ENCODE measurements at regions of chr9 and their contacts with region 1.

Region 1: GRCh38 chr9:115591584-115591984 is 473.6 kb upstream of the TNC start:
- DNase-seq: no peak
- H3K4me3 ChIP-seq: no peak overlapping the region
- H3K27ac ChIP-seq: no peak overlapping the region
- H3K4me1 ChIP-seq: no peaks in the 10 kb centered on the region
- H3K27me3 ChIP-seq: peaks cover 0 to 29% (median 3%) of the 10 kb centered on the region in 7 donors
- CTCF ChIP-seq: peak in 8 of 11 experiments; percentile 19 to 57 (median 40)
- POLR2A ChIP-seq: no peak

Region 2: GRCh38 chr9:116572095-116572748 is 980.6 kb after region 1 on chr9:
- intact Hi-C with region 1: loop called (anchors 5 kb)
- DNase-seq: no peak
- H3K4me3 ChIP-seq: no peak overlapping the region
- H3K27ac ChIP-seq: no peak overlapping the region
- H3K4me1 ChIP-seq: no peaks in the 10 kb centered on the region
- H3K27me3 ChIP-seq: no peaks in the 10 kb centered on the region
- CTCF ChIP-seq: peak in 10 of 11 experiments; percentile 37 to 75 (median 64)
- POLR2A ChIP-seq: no peak

Measured in spleen (tissue), 13 donors.